GM10248 (cell line): ENCODE measurements at regions of chr14 and their contacts with region 1.

Region 1: GRCh38 chr14:23379366-23380196 is 2.7 kb downstream of the CMTM5 start:
- DNase-seq: peak; percentile 86
- CTCF ChIP-seq: peak; percentile 92

Region 2: GRCh38 chr14:23259426-23259825 is 120.2 kb before region 1 on chr14:
- CTCF ChIA-PET with region 1: interaction called, 45 read pairs
- POLR2A ChIA-PET with region 1: no interaction called
- DNase-seq: no peak
- CTCF ChIP-seq: no peak

Region 3: DNA sequence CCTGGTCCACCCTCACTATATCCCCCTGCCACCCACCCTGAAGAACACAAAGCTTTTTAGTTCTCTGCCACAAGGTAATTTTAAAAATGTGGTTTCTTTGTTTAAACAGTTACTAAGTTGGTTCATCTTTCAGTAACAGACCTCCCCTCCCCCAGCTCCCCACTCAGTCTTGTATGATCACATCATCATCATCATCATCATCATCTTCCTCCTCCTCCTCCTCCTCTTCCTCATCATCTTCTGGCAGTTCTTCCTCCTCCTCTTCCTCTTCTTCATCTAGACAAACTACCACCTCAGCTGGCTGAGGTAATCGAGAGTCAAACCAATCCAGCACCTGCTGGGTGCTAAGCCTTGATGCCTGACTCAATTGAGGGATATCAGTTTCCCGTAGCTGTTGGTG is 104.2 kb before region 1 on chr14:
- CTCF ChIA-PET with region 1: interaction called, 22 read pairs
- POLR2A ChIA-PET with region 1: no interaction called
- DNase-seq: no peak
- CTCF ChIP-seq: no peak

Region 4: GRCh38 chr14:23327947-23328744 is 51.4 kb before region 1 on chr14:
- CTCF ChIA-PET with region 1: interaction called, 54 read pairs
- POLR2A ChIA-PET with region 1: no interaction called
- DNase-seq: peak; percentile 84
- CTCF ChIP-seq: peak; percentile 76

Region 5: GRCh38 chr14:23399591-23399990 is 20.0 kb after region 1 on chr14:
- CTCF ChIA-PET with region 1: interaction called, 33 read pairs
- POLR2A ChIA-PET with region 1: no interaction called
- DNase-seq: no peak
- CTCF ChIP-seq: no peak